ENCODE measurements at regions of chr6 and their contacts with region 1.

Region 1: GRCh38 chr6:41920921-41921711 is at the starts of genes BYSL and MED20:
- DNase-seq: peak; percentile 96
- H3K4me3 Mint-ChIP-seq: peak within 1 kb of the TSS; percentile 99
- H3K27ac Mint-ChIP-seq: peak within 1 kb of the TSS; percentile 100
- H3K4me1 Mint-ChIP-seq: peaks cover 41% of the 10 kb centered on the region
- H3K27me3 Mint-ChIP-seq: no peaks in the 10 kb centered on the region
- CTCF ChIP-seq: peak; percentile 96
- total RNA-seq, gene BYSL: 45.0 and 58.0 TPM in 2 replicates
- total RNA-seq, gene MED20: 27.6 and 29.2 TPM in 2 replicates

Region 2: DNA sequence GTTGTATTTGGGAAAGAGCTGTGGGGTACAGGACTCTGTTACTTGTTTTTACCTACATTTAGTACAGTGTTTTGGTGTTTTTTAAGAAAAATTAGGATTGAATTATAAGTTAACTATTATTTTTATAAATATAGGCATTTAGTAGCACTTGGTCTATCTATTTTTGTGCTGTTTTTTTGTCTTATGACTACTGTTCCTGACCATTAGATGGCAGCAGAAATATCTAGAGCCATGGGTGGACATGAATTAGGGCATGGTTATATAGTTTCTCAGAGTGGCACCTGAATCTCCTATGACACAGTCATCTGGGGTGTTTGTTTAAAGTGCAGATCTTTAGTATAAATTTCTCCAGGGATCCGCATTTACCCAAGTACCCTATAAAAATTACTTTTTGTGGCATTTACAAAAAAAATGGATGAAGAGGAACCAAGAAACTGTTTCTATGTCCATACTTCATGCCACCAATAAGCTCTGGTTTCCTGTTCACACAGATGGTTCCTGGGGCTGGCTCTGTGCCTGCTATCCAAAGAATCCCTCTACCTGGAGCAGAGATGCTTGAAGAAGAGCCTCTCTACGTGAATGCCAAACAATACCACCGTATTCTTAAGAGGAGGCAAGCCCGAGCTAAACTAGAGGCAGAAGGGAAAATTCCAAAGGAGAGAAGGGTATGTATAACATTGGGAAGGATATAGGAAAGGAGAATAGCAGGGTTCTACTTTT is 828.5 kb before region 1 on chr6:
- CTCF ChIA-PET with region 1: no interaction called
- POLR2A ChIA-PET with region 1: no interaction called
- intact Hi-C with region 1: no loop called
- DNase-seq: peak; percentile 37
- H3K4me3 Mint-ChIP-seq: no peak overlapping the region
- H3K27ac Mint-ChIP-seq: no peak overlapping the region
- H3K4me1 Mint-ChIP-seq: no peaks in the 10 kb centered on the region
- H3K27me3 Mint-ChIP-seq: no peaks in the 10 kb centered on the region
- CTCF ChIP-seq: peak; percentile 29

Region 3: GRCh38 chr6:41801380-41801779 is 119.7 kb before region 1 on chr6:
- CTCF ChIA-PET with region 1: interaction called, 10 read pairs
- POLR2A ChIA-PET with region 1: interaction called, 6 read pairs
- intact Hi-C with region 1: loop called (anchors 5 kb)
- DNase-seq: peak; percentile 44
- H3K4me3 Mint-ChIP-seq: no peak overlapping the region
- H3K27ac Mint-ChIP-seq: no peak overlapping the region
- H3K4me1 Mint-ChIP-seq: peaks cover 5% of the 10 kb centered on the region
- H3K27me3 Mint-ChIP-seq: no peaks in the 10 kb centered on the region
- CTCF ChIP-seq: peak; percentile 55

Region 4: GRCh38 chr6:41887331-41887751 is 33.8 kb before region 1 on chr6:
- CTCF ChIA-PET with region 1: no interaction called
- POLR2A ChIA-PET with region 1: interaction called, 11 read pairs
- intact Hi-C with region 1: no loop called
- DNase-seq: no peak
- H3K4me3 Mint-ChIP-seq: no peak overlapping the region
- H3K27ac Mint-ChIP-seq: no peak overlapping the region
- H3K4me1 Mint-ChIP-seq: no peaks in the 10 kb centered on the region
- H3K27me3 Mint-ChIP-seq: no peaks in the 10 kb centered on the region
- CTCF ChIP-seq: no peak

Region 5: DNA sequence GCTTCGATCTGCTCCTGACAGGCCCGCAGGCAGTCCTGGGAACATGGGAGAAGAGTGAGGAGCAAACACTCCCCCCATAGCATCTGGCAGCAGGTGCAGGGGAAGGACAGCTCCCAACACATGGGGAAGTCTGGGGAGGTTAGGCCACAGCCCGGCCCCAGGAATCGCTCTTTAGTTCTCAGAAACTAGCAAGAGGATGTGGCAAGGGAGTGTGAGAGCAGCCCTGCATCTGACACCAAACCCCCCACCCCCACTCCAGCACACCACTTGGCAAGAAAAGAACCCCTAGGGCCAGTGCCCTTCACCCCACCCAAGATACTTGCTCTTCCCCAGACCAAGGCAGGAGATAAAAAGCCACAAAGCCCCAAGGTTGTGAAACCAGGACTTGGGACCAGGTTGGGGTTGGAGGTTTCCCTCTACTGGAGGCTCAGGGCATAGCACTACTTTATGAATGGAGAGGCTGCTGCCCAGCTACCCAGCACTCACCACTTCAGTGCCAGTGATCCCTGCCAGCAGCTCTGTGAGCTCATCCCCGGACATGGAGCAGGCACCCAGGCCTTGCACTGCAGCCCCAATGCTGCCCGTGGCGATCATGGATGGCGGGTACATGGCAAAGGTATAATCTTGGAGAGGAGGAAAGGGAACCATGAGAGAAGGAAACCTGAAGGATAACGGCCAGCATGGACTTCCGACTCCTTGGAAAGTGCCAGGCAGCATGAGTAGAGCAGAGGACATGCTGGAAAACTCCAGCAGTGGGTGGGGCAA is 15.1 kb after region 1 on chr6:
- CTCF ChIA-PET with region 1: interaction called, 74 read pairs
- POLR2A ChIA-PET with region 1: interaction called, 157 read pairs
- intact Hi-C with region 1: loop called (anchors 1 kb)
- DNase-seq: peak; percentile 93
- H3K4me3 Mint-ChIP-seq: no peak overlapping the region
- H3K27ac Mint-ChIP-seq: peak overlapping the region; percentile 25
- H3K4me1 Mint-ChIP-seq: peaks cover 31% of the 10 kb centered on the region
- H3K27me3 Mint-ChIP-seq: no peaks in the 10 kb centered on the region
- CTCF ChIP-seq: peak; percentile 76

Region 6: GRCh38 chr6:42050266-42051032 is 129.3 kb after region 1 on chr6 and contains the start of gene TAF8:
- CTCF ChIA-PET with region 1: interaction called, 26 read pairs
- POLR2A ChIA-PET with region 1: interaction called, 121 read pairs
- intact Hi-C with region 1: no loop called
- DNase-seq: peak; percentile 93
- H3K4me3 Mint-ChIP-seq: peak within 1 kb of the TSS; percentile 91
- H3K27ac Mint-ChIP-seq: peak within 1 kb of the TSS; percentile 94
- H3K4me1 Mint-ChIP-seq: peaks cover 22% of the 10 kb centered on the region
- H3K27me3 Mint-ChIP-seq: no peaks in the 10 kb centered on the region
- CTCF ChIP-seq: no peak
- total RNA-seq, gene TAF8: 23.8 and 25.8 TPM in 2 replicates

Measured in MCF 10A (cell line).